ENCODE measurements at regions of chr10 and their contacts with region 1.

Region 1: DNA sequence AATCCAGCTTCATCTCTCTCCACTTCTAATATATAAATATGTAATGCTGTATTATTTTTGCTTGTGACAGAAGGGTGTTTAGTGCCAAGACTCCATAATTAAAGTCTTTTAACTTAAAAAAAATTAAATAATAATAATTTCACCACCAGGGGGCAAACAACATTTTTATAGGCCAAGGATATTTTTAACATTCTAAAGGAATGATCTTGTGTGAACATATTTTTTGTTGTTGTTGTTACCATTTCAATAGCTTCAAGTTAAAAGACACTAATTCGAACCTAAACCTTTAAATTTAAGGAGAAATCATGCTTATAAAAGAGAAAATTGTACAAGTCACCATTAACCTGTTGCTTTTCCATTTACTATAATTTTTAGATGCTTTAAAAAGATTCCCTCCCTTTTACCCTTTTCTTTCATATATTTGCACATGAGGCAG is 7.5 kb upstream of the DNAJC1 start:
- DNase-seq: peak; percentile 50
- H3K4me3 ChIP-seq: no peak overlapping the region
- H3K27ac ChIP-seq: no peak overlapping the region
- H3K4me1 ChIP-seq: no peaks in the 10 kb centered on the region
- H3K27me3 ChIP-seq: no peaks in the 10 kb centered on the region
- CTCF ChIP-seq: peak; percentile 55

Region 2: GRCh38 chr10:20276127-20276979 is 1734.6 kb before region 1 on chr10:
- CTCF ChIA-PET with region 1: interaction called, 10 read pairs
- POLR2A ChIA-PET with region 1: no interaction called
- intact Hi-C with region 1: no loop called
- DNase-seq: peak; percentile 17
- H3K4me3 ChIP-seq: no peak overlapping the region
- H3K27ac ChIP-seq: no peak overlapping the region
- H3K4me1 ChIP-seq: peaks cover 4% of the 10 kb centered on the region
- H3K27me3 ChIP-seq: no peaks in the 10 kb centered on the region
- CTCF ChIP-seq: no peak